Activated CD4-positive, alpha-beta T cell treated with anti-CD3 and anti-CD28 coated beads, Interleukin-2, amount 10 ng/mL, durations not matched to agents 7 days and 5 days (primary cell): ENCODE measurements at regions of chr1 and their contacts with region 1.

Region 1: GRCh38 chr1:156705918-156706656 is 704 bp upstream of the CRABP2 start:
- DNase-seq: peak; percentile 65
- H3K4me3 Mint-ChIP-seq: peak overlapping the region; percentile 71
- H3K27ac Mint-ChIP-seq: no peak overlapping the region
- H3K4me1 Mint-ChIP-seq: peaks cover 25% of the 10 kb centered on the region
- H3K27me3 Mint-ChIP-seq: peaks cover 38% of the 10 kb centered on the region

Region 2: DNA sequence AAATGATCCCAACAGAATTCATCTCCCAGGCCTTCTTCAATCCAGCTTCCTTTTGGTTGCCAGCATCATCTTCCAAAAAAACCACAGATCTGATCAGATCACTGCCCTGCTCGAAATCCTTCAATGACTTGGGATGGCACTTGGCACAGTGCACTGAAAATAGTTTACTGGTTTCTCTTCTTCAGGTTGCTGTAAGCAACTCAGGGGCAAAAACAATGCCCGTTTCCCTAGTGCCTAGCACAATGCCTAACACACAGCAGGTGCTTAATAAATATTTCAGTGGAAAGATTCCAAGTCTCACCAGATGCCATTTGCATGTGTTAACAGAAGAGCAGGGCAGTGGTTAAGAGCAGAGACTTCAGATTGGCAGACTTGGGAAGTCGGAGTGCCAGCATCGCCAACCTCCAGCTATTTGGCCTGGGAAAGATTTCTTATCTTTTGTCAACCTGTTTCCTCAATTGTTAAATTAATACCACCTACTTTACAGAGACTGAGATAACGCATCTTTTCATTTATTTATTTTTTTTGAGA is 11.3 kb after region 1 on chr1:
- CTCF ChIA-PET with region 1: interaction called, 21 read pairs
- POLR2A ChIA-PET with region 1: interaction called, 3 read pairs
- DNase-seq: no peak
- H3K4me3 Mint-ChIP-seq: no peak overlapping the region
- H3K27ac Mint-ChIP-seq: no peak overlapping the region
- H3K4me1 Mint-ChIP-seq: peaks cover 2% of the 10 kb centered on the region
- H3K27me3 Mint-ChIP-seq: no peaks in the 10 kb centered on the region